Uterus (tissue), 4 donors: ENCODE measurements at regions of chr2 and their contacts with region 1.

Region 1: DNA sequence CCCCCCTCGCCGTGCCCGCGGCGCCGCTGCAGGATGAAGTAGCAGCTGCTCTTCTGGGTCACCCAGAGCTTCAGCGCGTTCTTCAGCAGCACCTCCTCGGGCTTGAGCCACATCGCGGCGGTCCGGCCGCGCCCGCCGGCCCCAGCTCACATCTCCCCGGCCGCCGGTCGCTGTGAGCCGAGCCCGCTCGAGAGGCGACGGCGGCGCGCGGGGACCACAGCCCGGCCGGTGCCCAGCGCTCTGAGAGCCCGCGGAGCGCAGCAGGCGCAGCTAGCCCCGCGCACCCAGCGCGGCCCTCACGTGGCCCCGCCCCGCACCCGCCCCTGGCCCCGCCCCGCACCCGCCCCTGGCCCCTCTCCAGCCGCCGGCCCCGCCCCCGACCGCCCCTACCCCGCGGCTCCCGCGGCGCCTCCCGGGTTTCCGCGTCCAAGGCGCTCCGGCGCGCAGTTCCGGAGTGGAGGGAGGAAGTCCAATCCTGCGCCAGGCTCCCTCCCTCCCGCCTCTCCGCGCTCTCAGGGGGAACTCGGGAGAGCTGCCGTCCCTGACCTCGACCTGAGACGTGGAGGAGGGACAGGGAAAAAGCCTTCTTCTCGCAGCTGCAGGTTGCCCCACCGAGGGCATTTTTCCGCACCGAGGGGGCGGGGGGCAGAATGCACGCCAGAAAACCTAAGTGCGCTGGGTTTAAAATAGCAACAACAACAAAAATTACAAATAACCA is at the start of gene TBC1D8:
- DNase-seq: peak; percentile 85 to 90
- H3K4me3 ChIP-seq: peak within 1 kb of the TSS; percentile 91 to 94
- H3K27ac ChIP-seq: peak within 1 kb of the TSS; percentile 88 to 91
- H3K4me1 ChIP-seq: peaks cover 3 to 15% of the 10 kb centered on the region in 2 donors
- H3K27me3 ChIP-seq: no peaks in the 10 kb centered on the region
- CTCF ChIP-seq: peak in 2 of 4 experiments; percentile 3 to 21
- POLR2A ChIP-seq: peak; percentile 90 to 93
- total RNA-seq, gene TBC1D8: 16.7 to 44.0 (median 19.7) TPM

Region 2: DNA sequence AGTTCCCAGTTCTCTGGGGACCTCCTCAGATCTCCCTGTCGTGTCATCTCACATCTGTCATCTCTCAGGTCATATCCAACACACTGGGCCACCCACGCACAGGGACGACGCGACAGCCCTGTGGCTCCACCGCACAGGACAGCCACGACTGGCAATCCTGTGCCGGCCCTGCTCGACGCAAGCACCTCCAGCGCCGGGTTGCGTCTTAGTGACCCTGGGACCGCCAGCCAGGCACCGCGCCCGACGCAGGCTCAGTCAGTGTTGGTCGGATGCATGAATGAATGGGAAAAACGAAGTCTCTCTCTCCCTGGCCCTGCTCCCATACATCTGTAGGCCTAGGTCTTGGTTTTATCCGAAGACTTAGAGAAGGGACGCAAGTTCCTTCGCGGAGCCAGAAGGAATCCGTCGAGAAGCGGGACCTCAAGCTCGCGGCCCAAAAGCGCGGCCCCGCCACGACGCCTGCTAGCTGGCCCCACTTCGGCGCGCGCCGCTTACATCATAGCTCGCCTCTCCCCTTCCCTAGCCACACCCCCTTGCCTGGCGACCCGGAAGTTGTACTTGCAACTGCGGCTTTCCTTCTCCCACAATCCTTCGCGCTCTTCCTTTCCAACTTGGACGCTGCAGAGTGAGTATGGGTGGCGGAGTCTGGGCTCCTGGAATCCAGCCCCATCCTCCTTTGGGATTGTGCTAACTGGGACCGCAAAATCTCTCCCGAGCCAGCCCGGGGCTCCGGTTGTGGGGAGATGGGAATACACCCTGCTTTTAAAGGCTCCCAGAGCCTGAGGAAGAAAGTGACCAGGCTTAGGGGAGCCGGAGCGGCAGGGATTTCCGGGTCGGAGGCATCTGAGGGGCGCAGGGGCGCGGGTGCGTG is 149.4 kb before region 1 on chr2 and contains the start of gene RPL31:
- intact Hi-C with region 1: loop called (anchors 5 kb)
- DNase-seq: peak; percentile 96 to 98
- H3K4me3 ChIP-seq: peak within 1 kb of the TSS; percentile 66 to 86
- H3K27ac ChIP-seq: peak within 1 kb of the TSS; percentile 88 to 89
- H3K4me1 ChIP-seq: no peaks in the 10 kb centered on the region
- H3K27me3 ChIP-seq: no peaks in the 10 kb centered on the region
- CTCF ChIP-seq: peak in 2 of 4 experiments; percentile 10 to 29
- POLR2A ChIP-seq: peak; percentile 74 to 85
- total RNA-seq, gene RPL31: 918 to 2,301 (median 1,306) TPM

Region 3: DNA sequence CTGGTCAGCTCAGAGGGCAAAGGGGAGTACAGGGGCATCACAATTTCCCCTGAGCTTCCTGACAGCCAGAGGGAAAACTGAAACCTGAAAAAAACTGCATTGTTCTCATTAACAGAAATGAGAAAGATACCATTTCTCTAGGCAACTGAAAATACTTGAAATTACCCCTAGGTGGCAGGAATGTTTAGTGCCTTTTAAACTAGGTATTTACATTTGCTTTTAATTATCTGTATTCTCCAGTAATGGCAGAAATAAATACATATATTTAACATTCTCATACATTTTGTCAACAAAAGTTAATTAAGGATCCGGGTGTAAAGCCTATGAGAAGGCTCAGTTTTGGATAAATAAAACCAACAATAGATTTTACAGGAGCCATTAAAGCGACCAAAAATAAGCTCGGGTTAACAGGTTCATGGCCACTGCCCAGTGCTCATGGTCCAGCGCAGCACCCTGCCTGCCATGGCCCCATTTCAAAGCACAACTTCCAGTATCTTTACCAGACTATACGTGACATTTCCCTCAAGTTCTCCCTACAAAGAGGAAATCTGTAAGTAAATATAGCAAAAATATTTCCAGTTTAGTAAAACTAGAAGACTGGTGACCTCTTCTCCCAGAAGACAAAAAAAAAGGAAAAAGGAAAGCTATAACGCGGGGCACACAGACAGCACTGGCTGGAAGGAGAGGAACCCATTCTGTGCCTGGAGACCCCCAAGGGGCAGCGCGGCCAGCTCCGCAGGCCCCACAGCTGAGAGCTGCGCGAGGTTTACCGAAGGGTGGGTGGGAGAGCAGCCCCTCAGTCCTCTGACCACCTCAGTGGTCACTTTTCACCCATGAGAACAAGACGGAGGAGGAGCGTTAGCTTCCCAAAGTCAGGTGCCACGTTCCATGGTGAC is 114.5 kb before region 1 on chr2:
- intact Hi-C with region 1: loop called (anchors 10 kb)
- DNase-seq: no peak
- H3K4me3 ChIP-seq: no peak overlapping the region
- H3K27ac ChIP-seq: no peak overlapping the region
- H3K4me1 ChIP-seq: no peaks in the 10 kb centered on the region
- H3K27me3 ChIP-seq: no peaks in the 10 kb centered on the region
- CTCF ChIP-seq: peak; percentile 40 to 55 (median 54)
- POLR2A ChIP-seq: no peak

Region 4: GRCh38 chr2:101474752-101475384 is 323.6 kb after region 1 on chr2 and contains the start of gene RFX8:
- intact Hi-C with region 1: no loop called
- DNase-seq: peak; percentile 21 to 24
- H3K4me3 ChIP-seq: peak within 1 kb of the TSS; percentile 28 to 65
- H3K27ac ChIP-seq: peak within 1 kb of the TSS; percentile 82 to 83
- H3K4me1 ChIP-seq: no peaks in the 10 kb centered on the region
- H3K27me3 ChIP-seq: no peaks in the 10 kb centered on the region
- CTCF ChIP-seq: no peak
- POLR2A ChIP-seq: no peak
- total RNA-seq, gene RFX8: 0.51 to 1.4 (median 1.1) TPM in 3 of 4 donors, not detected in the other